PC-3 (cell line): ENCODE measurements at regions of chr13 and their contacts with region 1.

Region 1: GRCh38 chr13:113633956-113634676 is 23.9 kb downstream of the ATP4B start:
- DNase-seq: no peak
- ATAC-seq: no peak
- H3K4me3 ChIP-seq: no peak overlapping the region
- H3K27ac ChIP-seq: no peak overlapping the region
- H3K4me1 ChIP-seq: no peaks in the 10 kb centered on the region
- H3K27me3 ChIP-seq: no peaks in the 10 kb centered on the region
- CTCF ChIP-seq: no peak

Region 2: DNA sequence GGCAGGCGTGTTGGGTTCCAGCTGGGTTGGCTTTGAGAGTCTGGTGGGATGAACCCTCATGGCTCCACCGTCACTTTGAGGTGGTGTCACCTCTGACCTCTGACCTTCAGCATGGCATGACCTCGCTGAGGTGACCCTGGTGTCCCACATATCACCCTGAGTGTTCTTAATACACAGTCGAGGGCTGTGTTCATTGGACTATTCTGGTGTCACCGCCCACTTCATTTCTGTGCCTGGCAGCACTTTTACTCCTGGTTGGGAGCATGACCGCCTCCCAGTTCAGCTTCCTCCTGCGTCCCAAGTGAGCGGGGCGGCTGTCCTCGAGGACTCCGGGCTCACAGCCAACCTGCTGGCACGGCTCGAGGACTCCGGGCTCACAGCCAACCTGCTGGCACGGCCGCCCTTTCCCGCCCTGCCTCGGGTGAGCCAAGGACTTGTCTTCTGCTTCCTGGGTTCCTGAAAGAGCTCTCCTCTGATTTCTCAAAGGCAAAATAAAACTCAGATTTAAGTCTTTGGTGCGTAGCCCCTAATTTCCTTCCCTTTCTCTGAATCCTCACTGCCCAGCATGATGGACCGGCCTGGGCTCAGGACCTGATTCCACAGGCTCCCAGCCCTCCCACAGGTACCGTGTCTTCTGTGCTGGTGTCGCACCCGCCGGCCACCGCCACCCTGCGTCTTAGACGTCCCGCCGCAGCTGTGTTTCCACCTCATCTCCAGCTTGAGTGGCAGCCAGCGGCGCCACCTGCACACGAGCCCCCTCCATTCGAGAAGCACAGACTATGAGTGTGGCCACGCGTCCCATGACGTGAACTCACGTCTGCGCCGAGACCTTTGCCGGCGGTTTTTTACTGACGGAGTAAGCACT is 13.5 kb after region 1 on chr13:
- CTCF ChIA-PET with region 1: no interaction called
- POLR2A ChIA-PET with region 1: no interaction called
- intact Hi-C with region 1: loop called (anchors 2 kb)
- DNase-seq: peak; percentile 82
- ATAC-seq: peak; percentile 87
- H3K4me3 ChIP-seq: no peak overlapping the region
- H3K27ac ChIP-seq: 0 out of 2 replicates have a peak overlapping the region, but pooled peaks have one; percentile 14
- H3K4me1 ChIP-seq: peaks cover 9% of the 10 kb centered on the region; the same call in 1 of the 2 replicates
- H3K27me3 ChIP-seq: no peaks in the 10 kb centered on the region
- CTCF ChIP-seq: no peak